ENCODE measurements at regions of chr5 and their contacts with region 1.

Region 1: GRCh38 chr5:175059687-175060211 is 335.4 kb downstream of the MSX2 start:
- DNase-seq: peak; percentile 41 to 86
- H3K4me3 ChIP-seq: peak overlapping the region; percentile 23 to 47 (median 38); a peak in 6 of 8 replicates
- H3K27ac ChIP-seq: no peak overlapping the region
- H3K4me1 ChIP-seq: peaks cover 0 to 5% (median 3%) of the 10 kb centered on the region in 4 experiments; a peak in 4 of 7 replicates
- H3K27me3 ChIP-seq: no peaks in the 10 kb centered on the region; a peak in 1 of 7 replicates
- CTCF ChIP-seq: peak; percentile 38 to 79 (median 51)
- EP300 ChIP-seq: no peak
- POLR2A ChIP-seq: no peak
- RAD21 ChIP-seq: peak in 1 of 2 experiments; percentile 26; a peak in 2 of 4 replicates

Region 2: DNA sequence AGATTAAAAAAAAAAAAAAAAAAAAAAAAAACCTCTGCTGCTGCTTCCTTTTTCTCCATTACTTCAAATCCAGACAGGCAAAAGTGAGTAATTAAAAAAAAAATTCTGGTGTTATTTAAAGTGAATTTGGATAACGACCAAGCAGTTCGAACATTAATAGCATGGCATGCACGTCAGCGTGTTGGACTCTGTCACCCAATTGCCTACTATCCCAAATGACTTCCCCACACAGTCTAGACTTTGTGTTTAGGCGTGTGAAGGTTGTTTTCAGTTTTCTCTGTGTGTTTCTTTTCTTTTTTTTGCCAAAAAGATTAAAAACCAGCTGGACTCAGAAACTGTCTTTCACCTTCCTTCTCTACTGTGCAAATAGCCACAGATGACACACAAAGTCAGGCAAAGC is 13.9 kb before region 1 on chr5:
- CTCF ChIA-PET with region 1: no interaction called
- POLR2A ChIA-PET with region 1: no interaction called
- DNase-seq: no peak
- H3K4me3 ChIP-seq: no peak overlapping the region
- H3K27ac ChIP-seq: no peak overlapping the region
- H3K4me1 ChIP-seq: no peaks in the 10 kb centered on the region
- H3K27me3 ChIP-seq: no peaks in the 10 kb centered on the region
- CTCF ChIP-seq: no peak
- EP300 ChIP-seq: no peak
- POLR2A ChIP-seq: no peak
- RAD21 ChIP-seq: no peak

Region 3: DNA sequence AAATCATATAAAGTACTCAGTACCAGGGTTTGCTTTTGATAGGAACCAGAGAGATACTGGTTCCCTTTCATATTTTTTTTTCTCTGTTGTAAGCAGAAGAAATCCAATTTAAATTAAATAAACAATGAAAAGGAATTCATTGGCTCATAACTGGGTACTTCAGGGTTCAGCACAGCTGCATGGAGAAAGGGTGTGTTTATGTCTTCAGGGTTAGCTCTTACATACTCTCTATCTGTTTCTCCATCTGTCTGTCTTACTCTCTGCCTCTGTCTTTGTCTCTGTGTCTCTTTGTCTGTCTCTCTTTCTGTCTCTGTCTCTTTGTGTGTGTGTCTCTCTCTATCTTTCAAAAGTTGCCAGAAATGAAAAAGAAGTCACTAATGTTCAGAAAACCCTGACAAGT is 10.5 kb after region 1 on chr5:
- CTCF ChIA-PET with region 1: interaction called, 11 read pairs
- POLR2A ChIA-PET with region 1: no interaction called
- DNase-seq: no peak
- H3K4me3 ChIP-seq: no peak overlapping the region
- H3K27ac ChIP-seq: no peak overlapping the region
- H3K4me1 ChIP-seq: no peaks in the 10 kb centered on the region
- H3K27me3 ChIP-seq: no peaks in the 10 kb centered on the region
- CTCF ChIP-seq: no peak
- EP300 ChIP-seq: no peak
- POLR2A ChIP-seq: no peak
- RAD21 ChIP-seq: no peak

Measured in H1 (cell line).